ENCODE measurements at regions of chr12 and their contacts with region 1.

Region 1: DNA sequence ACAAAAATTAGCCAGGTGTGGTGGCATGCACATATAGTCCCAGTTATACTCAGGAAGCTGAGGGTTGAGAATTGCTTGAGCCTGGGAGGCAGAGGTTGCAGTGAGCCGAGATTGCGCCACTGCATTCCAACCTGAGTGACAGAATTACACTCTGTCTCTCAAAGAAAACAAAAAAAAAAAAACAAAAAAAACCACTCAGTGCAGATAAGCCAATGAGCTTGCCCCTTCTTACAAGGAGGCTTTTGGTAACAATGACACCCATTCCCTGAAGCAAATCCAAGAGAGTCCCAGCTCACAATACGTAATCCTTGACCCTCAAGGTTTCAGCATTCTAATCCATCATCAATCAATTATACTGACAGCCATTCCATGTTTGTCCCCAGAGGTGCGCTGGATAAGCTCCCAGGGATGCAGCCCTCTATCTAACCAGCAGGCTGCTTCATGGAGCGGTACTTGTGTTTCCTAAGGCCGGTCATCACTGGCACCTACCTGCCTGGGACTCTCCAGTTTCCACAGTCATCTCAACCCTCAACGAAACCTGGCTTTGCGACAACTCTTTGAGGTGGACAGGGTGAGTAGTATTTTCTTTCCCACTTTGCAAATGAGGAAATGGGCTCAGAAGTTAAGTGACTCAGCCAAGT is 12.4 kb downstream of the GCN1 start:
- DNase-seq: peak; percentile 92
- ATAC-seq: peak; percentile 82
- H3K4me3 ChIP-seq: no peak overlapping the region
- H3K27ac ChIP-seq: peak overlapping the region; percentile 72
- H3K4me1 ChIP-seq: peaks cover 24% of the 10 kb centered on the region
- H3K27me3 ChIP-seq: no peaks in the 10 kb centered on the region
- CTCF ChIP-seq: no peak; the same call in 1 of the 2 replicates

Region 2: GRCh38 chr12:119826661-119827445 is 355.3 kb before region 1 on chr12:
- CTCF ChIA-PET with region 1: no interaction called
- POLR2A ChIA-PET with region 1: interaction called, 12 read pairs
- intact Hi-C with region 1: no loop called
- DNase-seq: no peak
- ATAC-seq: no peak
- H3K4me3 ChIP-seq: no peak overlapping the region
- H3K27ac ChIP-seq: no peak overlapping the region
- H3K4me1 ChIP-seq: no peaks in the 10 kb centered on the region
- H3K27me3 ChIP-seq: no peaks in the 10 kb centered on the region
- CTCF ChIP-seq: no peak

Region 3: GRCh38 chr12:120346681-120347080 is 164.6 kb after region 1 on chr12:
- CTCF ChIA-PET with region 1: no interaction called
- POLR2A ChIA-PET with region 1: no interaction called
- intact Hi-C with region 1: no loop called
- DNase-seq: peak; percentile 36
- ATAC-seq: 0 out of 2 replicates have a peak, but pooled peaks have one; percentile 32
- H3K4me3 ChIP-seq: no peak overlapping the region
- H3K27ac ChIP-seq: no peak overlapping the region
- H3K4me1 ChIP-seq: peaks cover 6% of the 10 kb centered on the region
- H3K27me3 ChIP-seq: no peaks in the 10 kb centered on the region
- CTCF ChIP-seq: peak; percentile 43